H1 (cell line): ENCODE measurements at regions of chr2 and their contacts with region 1.

Region 1: GRCh38 chr2:20242060-20243006 is 17.4 kb upstream of the SDC1 start:
- DNase-seq: peak in 1 of 2 experiments; percentile 93
- H3K4me3 ChIP-seq: no peak overlapping the region
- H3K27ac ChIP-seq: 0 out of 2 replicates have a peak overlapping the region, but pooled peaks have one; percentile 3
- H3K4me1 ChIP-seq: peaks cover 0 to 8% (median 2%) of the 10 kb centered on the region in 4 experiments; a peak in 5 of 7 replicates
- H3K27me3 ChIP-seq: no peaks in the 10 kb centered on the region; a peak in 1 of 7 replicates
- CTCF ChIP-seq: peak; percentile 63 to 91 (median 86)
- EP300 ChIP-seq: no peak
- POLR2A ChIP-seq: no peak
- RAD21 ChIP-seq: peak; percentile 29 to 52

Region 2: DNA sequence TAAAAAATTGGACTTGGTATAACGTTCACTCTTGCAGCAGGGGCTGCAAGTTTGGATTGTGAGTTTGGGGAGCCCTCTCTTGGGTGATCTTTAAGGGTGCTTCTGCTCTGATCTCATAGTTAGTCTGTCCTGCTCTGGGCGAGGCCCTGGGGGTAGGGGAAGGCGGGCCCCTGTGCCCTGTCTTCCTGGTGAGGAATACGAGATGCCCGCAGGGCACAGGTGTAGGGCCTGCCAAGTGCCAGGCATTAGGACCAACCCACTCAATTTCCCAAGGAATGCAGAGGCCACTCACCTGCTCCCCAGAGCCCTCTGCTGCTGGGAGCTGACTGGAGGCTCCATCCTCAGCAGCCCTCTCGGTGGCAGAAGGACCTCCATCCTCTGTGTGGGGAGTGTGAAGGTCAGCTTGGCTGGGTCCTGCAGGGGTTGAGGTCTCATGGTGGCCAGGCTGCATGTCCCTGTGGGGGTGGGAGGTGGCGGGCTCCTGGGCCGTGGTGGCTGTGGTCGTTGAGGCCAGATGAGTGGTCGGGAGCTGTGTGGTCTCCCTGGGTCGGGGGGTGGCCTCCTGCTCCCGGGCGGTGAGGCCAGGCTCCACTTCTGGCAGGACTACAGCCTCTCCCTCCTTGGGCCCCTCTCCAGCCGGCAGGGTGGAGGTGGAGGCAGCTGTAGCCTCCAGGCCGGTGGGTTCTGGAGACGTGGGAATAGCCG is 38.7 kb before region 1 on chr2:
- CTCF ChIA-PET with region 1: no interaction called
- POLR2A ChIA-PET with region 1: no interaction called
- DNase-seq: no peak
- H3K4me3 ChIP-seq: no peak overlapping the region
- H3K27ac ChIP-seq: no peak overlapping the region
- H3K4me1 ChIP-seq: peaks cover 0 to 3% (median 0%) of the 10 kb centered on the region in 4 experiments; a peak in 1 of 7 replicates
- H3K27me3 ChIP-seq: no peaks in the 10 kb centered on the region
- CTCF ChIP-seq: no peak
- EP300 ChIP-seq: no peak
- POLR2A ChIP-seq: no peak
- RAD21 ChIP-seq: no peak

Region 3: DNA sequence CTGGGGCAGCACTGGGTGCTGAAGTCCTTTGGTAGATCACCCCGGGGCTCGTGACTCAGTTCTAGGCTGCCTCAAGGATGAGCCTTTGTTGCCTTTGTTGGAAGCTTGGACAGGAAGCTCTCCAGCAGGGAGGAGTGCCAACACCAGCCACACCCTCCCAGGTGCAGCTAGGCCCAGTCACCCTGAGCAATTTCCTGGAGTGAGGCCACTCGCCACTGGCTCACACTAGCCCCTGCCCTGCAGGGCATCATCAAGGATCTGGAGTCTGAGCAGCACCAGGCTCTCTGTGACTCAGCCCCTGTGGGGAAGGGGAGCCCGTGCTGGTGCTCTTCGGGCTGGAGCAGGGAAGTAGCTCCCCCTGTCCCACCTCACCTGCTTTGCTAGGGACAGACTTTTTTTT is 10.7 kb before region 1 on chr2:
- CTCF ChIA-PET with region 1: interaction called, 63 read pairs
- POLR2A ChIA-PET with region 1: interaction called, 5 read pairs
- DNase-seq: peak; percentile 68 to 72
- H3K4me3 ChIP-seq: no peak overlapping the region
- H3K27ac ChIP-seq: no peak overlapping the region
- H3K4me1 ChIP-seq: peaks cover 3 to 11% (median 5%) of the 10 kb centered on the region in 4 experiments
- H3K27me3 ChIP-seq: no peaks in the 10 kb centered on the region; a peak in 1 of 7 replicates
- CTCF ChIP-seq: peak in 2 of 3 experiments; percentile 16 to 33; a peak in 2 of 4 replicates
- EP300 ChIP-seq: no peak
- POLR2A ChIP-seq: no peak
- RAD21 ChIP-seq: peak; percentile 32 to 33; a peak in 3 of 4 replicates

Region 4: GRCh38 chr2:20264629-20265028 is 22.3 kb after region 1 on chr2:
- CTCF ChIA-PET with region 1: interaction called, 16 read pairs
- POLR2A ChIA-PET with region 1: interaction called, 5 read pairs
- DNase-seq: no peak
- H3K4me3 ChIP-seq: no peak overlapping the region
- H3K27ac ChIP-seq: no peak overlapping the region
- H3K4me1 ChIP-seq: no peaks in the 10 kb centered on the region
- H3K27me3 ChIP-seq: no peaks in the 10 kb centered on the region
- CTCF ChIP-seq: no peak
- EP300 ChIP-seq: no peak
- POLR2A ChIP-seq: no peak
- RAD21 ChIP-seq: no peak